ENCODE measurements at regions of chr16 and their contacts with region 1.

Region 1: GRCh38 chr16:30526823-30527635 is 663 bp upstream of the ZNF768 start:
- DNase-seq: peak; percentile 93
- H3K4me3 Mint-ChIP-seq: peak overlapping the region; percentile 84
- H3K27ac Mint-ChIP-seq: peak overlapping the region; percentile 54
- H3K4me1 Mint-ChIP-seq: peaks cover 46% of the 10 kb centered on the region
- H3K27me3 Mint-ChIP-seq: no peaks in the 10 kb centered on the region

Region 2: GRCh38 chr16:30445408-30446202 is 81.4 kb before region 1 on chr16 and contains the start of gene SEPHS2:
- intact Hi-C with region 1: loop called (anchors 1 kb)
- DNase-seq: peak; percentile 93
- H3K4me3 Mint-ChIP-seq: peak within 1 kb of the TSS; percentile 95
- H3K27ac Mint-ChIP-seq: peak within 1 kb of the TSS; percentile 97
- H3K4me1 Mint-ChIP-seq: peaks cover 42% of the 10 kb centered on the region
- H3K27me3 Mint-ChIP-seq: no peaks in the 10 kb centered on the region
- total RNA-seq, gene SEPHS2: 83.4 and 87.2 TPM in 2 replicates

Region 3: DNA sequence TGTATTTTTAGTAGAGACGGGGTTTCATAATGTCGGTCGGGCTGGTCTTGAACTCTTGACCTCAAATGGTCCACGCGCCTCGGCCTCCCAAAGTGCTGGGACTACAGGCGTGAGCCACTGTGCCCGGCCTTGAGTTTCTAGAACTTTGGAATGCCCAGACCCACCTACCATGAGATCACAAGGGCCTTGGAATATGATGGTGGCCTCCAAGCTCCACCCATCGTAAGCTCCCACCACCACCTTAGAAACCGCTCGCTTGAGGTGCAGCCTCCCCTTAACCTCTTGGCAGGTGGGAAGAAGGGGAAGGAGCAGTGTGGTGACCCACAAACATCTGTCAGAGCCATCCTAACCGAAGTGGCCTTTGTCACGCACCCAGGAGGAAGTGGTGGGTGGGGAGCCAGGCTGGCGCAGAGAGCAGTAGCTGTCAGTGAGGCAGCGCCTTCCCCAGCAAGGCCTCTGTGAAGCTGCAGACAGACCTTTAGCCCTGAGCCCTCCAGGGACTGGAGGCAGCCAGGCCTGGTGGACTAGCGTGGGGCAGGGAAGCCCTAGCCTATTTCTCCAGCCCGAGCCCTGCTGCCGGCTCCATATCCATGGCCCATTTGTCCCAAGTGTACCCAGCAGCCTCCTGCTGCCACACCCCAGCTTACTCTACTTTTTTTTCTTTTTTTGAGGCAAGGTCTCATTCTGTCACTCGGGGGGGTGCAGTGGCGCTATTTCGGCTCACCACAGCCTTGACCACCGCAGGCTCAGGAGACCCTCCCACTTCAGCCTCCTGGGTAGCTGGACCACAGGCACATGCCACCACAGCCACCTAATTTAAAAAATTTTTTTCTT is 68.3 kb before region 1 on chr16:
- intact Hi-C with region 1: no loop called
- DNase-seq: peak; percentile 88
- H3K4me3 Mint-ChIP-seq: peak overlapping the region; percentile 64
- H3K27ac Mint-ChIP-seq: peak overlapping the region; percentile 95
- H3K4me1 Mint-ChIP-seq: peaks cover 77% of the 10 kb centered on the region
- H3K27me3 Mint-ChIP-seq: no peaks in the 10 kb centered on the region

Region 4: DNA sequence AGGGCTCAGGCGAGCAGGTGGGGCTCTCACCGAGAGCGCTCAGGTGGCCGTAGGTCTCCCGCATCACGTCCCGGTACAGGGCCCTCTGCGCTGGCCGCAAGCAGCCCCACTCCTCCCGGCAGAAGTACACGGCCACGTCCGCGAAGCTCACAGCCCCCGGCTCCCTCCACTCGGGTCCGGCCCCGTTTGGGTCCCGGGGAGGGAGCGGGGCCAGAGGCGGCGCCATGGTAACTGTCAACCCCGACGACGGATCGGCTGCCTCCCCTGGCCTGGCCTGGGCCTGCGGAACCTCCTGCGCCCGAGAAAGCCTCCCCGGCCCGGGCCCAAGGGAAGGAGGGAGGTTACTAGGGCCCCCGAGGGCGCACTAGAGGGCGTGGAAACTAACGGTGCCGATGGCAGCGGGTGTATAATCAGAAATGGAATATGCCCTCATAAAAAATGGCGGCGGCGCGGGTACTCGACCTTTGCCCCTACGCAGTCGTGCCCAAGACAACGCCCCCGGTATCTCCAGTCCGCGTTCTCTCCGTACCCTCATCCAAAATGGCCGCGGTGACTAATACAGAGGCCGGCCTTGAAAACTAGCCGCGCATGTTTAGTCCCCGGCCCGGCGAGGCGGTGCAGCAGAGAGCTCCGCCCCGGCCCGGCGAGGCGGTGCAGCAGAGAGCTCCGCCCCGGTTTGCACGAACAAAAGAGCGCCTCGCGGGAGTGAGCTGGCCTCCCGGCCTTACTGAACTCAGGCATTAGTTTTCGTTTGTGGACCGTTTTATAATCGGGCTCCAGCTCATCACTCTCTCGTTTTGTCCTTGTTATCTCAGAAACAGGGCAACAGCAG is 31.1 kb after region 1 on chr16 and contains the start of gene ZNF764:
- intact Hi-C with region 1: loop called (anchors 1 kb)
- DNase-seq: peak; percentile 97
- H3K4me3 Mint-ChIP-seq: peak within 1 kb of the TSS; percentile 90
- H3K27ac Mint-ChIP-seq: peak within 1 kb of the TSS; percentile 92
- H3K4me1 Mint-ChIP-seq: peaks cover 42% of the 10 kb centered on the region
- H3K27me3 Mint-ChIP-seq: no peaks in the 10 kb centered on the region
- total RNA-seq, gene ZNF764: 17.9 and 21.2 TPM in 2 replicates

Region 5: DNA sequence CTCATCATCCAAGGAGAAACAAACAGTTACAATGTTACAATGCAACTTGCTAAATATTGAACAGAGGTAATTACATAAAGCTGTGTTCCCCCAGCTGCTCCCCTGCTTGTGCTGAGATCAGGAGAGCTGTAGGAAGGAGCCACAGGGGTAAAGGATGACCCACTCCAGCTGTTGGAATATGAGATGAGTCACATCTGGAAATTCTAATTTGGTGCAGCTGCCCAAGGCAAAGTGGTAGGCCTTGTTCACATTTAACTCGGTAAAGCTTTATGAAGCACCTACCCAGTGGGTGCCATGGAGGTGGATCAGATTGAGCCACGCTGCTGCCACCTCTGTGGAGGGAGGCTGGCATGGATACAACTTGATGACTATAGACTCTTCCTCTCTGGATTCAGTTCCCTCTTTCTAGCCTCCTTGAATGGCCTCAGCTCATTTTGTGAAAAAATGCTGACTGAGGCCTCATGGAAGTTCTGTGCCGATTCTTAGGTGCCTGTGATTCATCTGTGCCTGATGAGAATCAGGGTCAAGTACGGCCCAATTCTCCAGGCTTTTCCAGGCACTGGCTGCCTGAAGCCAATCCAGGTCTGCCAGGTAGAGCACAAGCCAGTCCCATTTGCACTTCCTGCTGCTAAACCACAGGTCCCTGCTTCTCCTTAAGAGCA is 75.7 kb after region 1 on chr16:
- intact Hi-C with region 1: loop called (anchors 2 kb)
- DNase-seq: no peak
- H3K4me3 Mint-ChIP-seq: no peak overlapping the region
- H3K27ac Mint-ChIP-seq: peak overlapping the region; percentile 40
- H3K4me1 Mint-ChIP-seq: peaks cover 12% of the 10 kb centered on the region
- H3K27me3 Mint-ChIP-seq: no peaks in the 10 kb centered on the region

Region 6: DNA sequence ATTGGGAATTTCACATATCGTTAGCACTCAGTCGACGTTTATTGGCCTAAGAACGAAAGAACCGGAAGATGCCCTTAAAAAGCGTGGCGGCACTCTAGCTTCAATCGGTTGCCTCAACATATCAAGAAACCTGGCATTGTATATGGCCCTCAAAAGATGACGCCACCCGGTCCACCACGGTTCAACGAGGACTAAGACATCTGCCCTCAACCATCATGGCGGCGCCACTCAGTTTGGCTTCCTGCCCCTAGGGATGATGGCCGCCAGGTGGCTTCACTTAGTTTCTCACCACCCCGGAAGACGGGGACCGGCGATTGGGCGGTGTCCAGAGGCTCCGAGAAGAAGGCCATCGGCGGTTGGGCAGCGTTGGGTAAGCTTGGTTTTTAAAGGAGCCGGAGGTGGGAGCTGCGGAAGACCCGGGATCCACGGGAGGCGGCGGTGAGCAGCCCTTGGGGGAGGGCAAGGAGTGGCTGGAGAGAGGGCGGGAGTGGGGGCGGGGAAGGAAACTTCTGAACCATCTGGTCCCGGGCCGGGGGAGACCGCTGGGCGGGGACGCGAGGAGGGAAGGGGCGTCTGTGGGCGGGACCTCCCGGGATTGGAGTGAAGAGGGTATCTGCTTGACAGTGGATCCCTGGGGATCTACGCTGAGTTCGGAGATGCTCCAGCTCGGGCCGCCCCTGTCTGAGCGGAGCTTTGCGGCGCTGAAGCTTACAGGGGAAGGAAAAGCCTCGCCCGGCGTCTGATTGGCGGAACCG is 123.5 kb after region 1 on chr16 and contains the start of gene PRR14:
- intact Hi-C with region 1: loop called (anchors 1 kb)
- DNase-seq: peak; percentile 98
- H3K4me3 Mint-ChIP-seq: peak within 1 kb of the TSS; percentile 97
- H3K27ac Mint-ChIP-seq: peak within 1 kb of the TSS; percentile 98
- H3K4me1 Mint-ChIP-seq: peaks cover 25% of the 10 kb centered on the region
- H3K27me3 Mint-ChIP-seq: peaks cover 2% of the 10 kb centered on the region
- total RNA-seq, gene PRR14: 91.9 and 97.4 TPM in 2 replicates

Measured in activated T-helper 1 cell treated with anti-CD3 and anti-CD28 coated beads, Interleukin-12 subunit alpha, Interleukin-12 subunit beta, Interleukin-2, Interleukin-4 antibody, amounts not matched to agents 30 ng/mL and 10 ng/mL and 1 ng/mL, durations not matched to agents 14 hours and 24 hours and 36 hours (primary cell).